Natural killer cell (primary cell): ENCODE measurements at regions of chr17 and their contacts with region 1.

Region 1: DNA sequence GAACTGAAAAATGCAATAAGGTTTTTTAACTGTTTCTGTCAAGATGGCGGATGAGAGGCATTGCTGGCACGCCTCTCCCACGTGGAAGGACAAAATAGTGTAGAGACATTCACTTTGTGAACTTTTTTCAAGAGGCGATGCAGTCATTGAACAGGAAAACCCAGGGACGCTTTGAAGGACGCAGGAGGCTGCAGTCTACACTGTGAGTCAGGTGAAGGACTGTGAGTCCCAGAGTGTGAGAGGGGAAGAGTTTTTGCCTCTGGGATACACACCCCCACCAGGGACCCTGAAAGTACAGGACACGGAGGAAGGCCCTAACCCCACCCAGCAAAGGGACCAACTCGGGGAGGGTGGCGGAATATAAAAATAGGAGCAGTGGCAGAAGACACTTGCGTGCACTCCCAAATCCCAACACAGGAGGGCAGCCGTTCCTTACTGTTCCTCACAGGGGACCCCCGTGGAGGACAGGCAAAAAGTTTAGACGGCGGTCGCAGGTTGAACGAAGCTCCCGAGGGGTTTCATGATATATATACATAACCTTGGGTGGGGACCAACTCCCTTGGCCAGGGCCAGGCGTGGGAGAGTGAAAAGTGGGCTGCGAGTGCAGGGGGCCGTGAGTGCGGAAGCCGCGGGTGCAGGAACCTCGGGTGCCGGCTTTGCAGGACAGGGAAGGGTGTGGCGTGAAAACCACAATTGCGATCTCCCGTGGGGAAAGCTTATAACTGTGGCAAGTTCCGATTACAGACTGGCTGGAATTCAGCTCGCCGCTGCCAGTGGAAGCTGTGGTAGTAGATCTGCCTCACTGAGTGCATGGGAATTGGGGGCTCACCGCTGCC is 82.0 kb upstream of the ALOX12 start:
- DNase-seq: peak; percentile 59 to 84
- ATAC-seq: peak; percentile 78 to 91 (median 90)
- H3K4me3 ChIP-seq: no peak overlapping the region
- H3K4me3 Mint-ChIP-seq: peak overlapping the region; percentile 94
- H3K27ac ChIP-seq: no peak overlapping the region
- H3K27ac Mint-ChIP-seq: peak overlapping the region in 1 of 2 donors; percentile 62
- H3K4me1 ChIP-seq: peaks cover 12% of the 10 kb centered on the region
- H3K4me1 Mint-ChIP-seq: peaks cover 14 to 17% of the 10 kb centered on the region in 2 donors
- H3K27me3 ChIP-seq: no peaks in the 10 kb centered on the region
- H3K27me3 Mint-ChIP-seq: peaks cover 25 to 40% of the 10 kb centered on the region in 2 donors
- CTCF ChIP-seq: peak; percentile 66

Region 2: GRCh38 chr17:7021993-7022778 is 108.4 kb after region 1 on chr17:
- intact Hi-C with region 1: loop called (anchors 1 kb)
- DNase-seq: peak; percentile 85 to 88
- ATAC-seq: peak; percentile 68 to 85 (median 69)
- H3K4me3 ChIP-seq: peak overlapping the region; percentile 39
- H3K4me3 Mint-ChIP-seq: peak overlapping the region; percentile 87
- H3K27ac ChIP-seq: peak overlapping the region; percentile 54
- H3K27ac Mint-ChIP-seq: peak overlapping the region; percentile 93 to 96
- H3K4me1 ChIP-seq: peaks cover 68% of the 10 kb centered on the region
- H3K4me1 Mint-ChIP-seq: peaks cover 39 to 76% of the 10 kb centered on the region in 2 donors
- H3K27me3 ChIP-seq: no peaks in the 10 kb centered on the region
- H3K27me3 Mint-ChIP-seq: no peaks in the 10 kb centered on the region
- CTCF ChIP-seq: peak; percentile 92

Region 3: DNA sequence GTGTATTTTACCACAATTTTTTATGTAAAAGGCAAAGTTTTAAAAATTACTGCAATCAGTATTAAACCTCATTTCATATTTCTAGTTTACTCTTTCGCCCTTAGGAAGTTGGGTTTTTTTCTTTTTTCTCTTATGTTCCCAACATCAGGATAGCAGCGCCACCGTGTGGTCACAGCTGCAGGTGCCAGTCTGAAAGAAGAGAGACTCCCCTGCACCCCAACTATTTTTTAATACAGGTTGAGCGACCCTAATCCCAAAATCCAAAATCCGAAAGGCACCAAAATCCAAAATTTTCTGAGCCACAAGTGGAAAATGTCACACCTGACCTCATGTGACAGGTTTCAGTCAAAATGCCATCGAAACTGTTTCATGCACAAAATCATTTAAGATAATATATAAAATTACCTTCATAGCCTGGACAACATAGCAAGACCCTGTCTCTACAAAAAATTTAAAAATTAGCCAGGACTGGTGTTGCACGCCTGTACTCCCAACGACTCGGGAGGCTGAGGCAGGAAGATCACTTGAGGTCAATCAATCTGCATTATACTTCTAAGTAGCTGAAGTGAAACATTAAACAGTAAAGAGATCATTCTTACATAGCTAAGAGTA is 222.5 kb after region 1 on chr17:
- intact Hi-C with region 1: loop called (anchors 1 kb)
- DNase-seq: peak; percentile 71 to 93
- ATAC-seq: peak in 2 of 3 donors; percentile 30 to 46
- H3K4me3 ChIP-seq: no peak overlapping the region
- H3K4me3 Mint-ChIP-seq: no peak overlapping the region
- H3K27ac ChIP-seq: no peak overlapping the region
- H3K27ac Mint-ChIP-seq: no peak overlapping the region
- H3K4me1 ChIP-seq: peaks cover 24% of the 10 kb centered on the region
- H3K4me1 Mint-ChIP-seq: peaks cover 12 to 13% of the 10 kb centered on the region in 2 donors
- H3K27me3 ChIP-seq: peaks cover 3% of the 10 kb centered on the region
- H3K27me3 Mint-ChIP-seq: peaks cover 14 to 24% of the 10 kb centered on the region in 2 donors
- CTCF ChIP-seq: peak; percentile 93